ENCODE measurements at regions of chr19 and their contacts with region 1.

Region 1: DNA sequence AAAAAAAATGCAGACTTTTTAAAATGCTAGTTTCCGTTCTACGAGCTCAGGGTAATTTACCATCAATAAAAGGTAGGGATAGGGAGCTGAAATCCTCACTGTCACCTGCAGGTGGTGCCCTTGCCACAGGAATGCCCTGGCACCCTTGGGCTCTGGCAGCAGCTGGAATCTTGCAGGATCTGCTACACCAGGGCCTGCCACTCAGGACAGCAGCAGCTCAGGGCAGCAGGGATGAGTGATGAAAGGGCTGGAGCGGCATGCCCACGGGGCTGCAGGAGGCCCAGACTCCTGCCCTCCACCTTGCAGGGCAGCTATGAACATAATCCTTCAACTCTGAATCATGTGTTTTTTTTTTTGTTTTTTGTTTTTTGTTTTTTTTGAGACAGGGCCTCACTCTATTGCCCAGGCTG is 54.0 kb downstream of the GNG7 start:
- DNase-seq: peak; percentile 72
- H3K4me3 ChIP-seq: no peak overlapping the region
- H3K27ac ChIP-seq: no peak overlapping the region
- H3K4me1 ChIP-seq: no peaks in the 10 kb centered on the region
- H3K27me3 ChIP-seq: peaks cover 0 to 3% of the 10 kb centered on the region in 2 experiments
- CTCF ChIP-seq: peak; percentile 73 to 87
- POLR2A ChIP-seq: no peak

Region 2: DNA sequence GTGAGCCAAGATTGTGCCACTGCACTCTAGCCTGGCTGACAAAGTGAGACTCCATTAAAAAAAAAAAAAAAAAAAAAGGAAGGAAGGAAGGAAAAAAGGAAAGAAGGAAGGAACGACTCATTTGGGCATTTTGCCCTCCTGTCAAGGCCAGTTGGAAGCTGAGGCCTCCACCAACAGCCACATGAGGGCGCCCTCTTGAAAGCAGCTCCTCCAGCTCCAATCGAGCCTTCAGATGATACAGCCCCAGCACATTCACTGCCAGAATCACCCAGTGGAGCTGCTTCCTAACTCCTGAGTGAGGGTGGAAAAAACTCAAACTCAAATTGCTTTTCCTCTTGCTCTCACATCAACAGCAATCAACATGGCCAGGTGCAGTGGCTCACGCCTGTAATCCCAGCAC is 13.1 kb after region 1 on chr19:
- CTCF ChIA-PET with region 1: interaction called, 15 read pairs
- POLR2A ChIA-PET with region 1: no interaction called
- dilution Hi-C with region 1: no loop called
- intact Hi-C with region 1: no loop called
- DNase-seq: no peak
- H3K4me3 ChIP-seq: no peak overlapping the region
- H3K27ac ChIP-seq: no peak overlapping the region
- H3K4me1 ChIP-seq: no peaks in the 10 kb centered on the region
- H3K27me3 ChIP-seq: peaks cover 0 to 2% of the 10 kb centered on the region in 2 experiments
- CTCF ChIP-seq: peak in 1 of 2 donors; percentile 9
- POLR2A ChIP-seq: no peak

Region 3: GRCh38 chr19:2739602-2740313 is 91.2 kb after region 1 on chr19 and contains the start of gene SLC39A3:
- CTCF ChIA-PET with region 1: interaction called, 14 read pairs
- POLR2A ChIA-PET with region 1: no interaction called
- dilution Hi-C with region 1: no loop called
- intact Hi-C with region 1: no loop called
- DNase-seq: peak; percentile 97
- H3K4me3 ChIP-seq: peak within 1 kb of the TSS; percentile 84 to 96 (median 90)
- H3K27ac ChIP-seq: peak within 1 kb of the TSS; percentile 9
- H3K4me1 ChIP-seq: peaks cover 6% of the 10 kb centered on the region
- H3K27me3 ChIP-seq: no peaks in the 10 kb centered on the region
- CTCF ChIP-seq: no peak
- POLR2A ChIP-seq: no peak
- total RNA-seq, gene SLC39A3: 25.8 and 28.0 TPM in 2 replicates

Region 4: GRCh38 chr19:2867025-2867991 is 218.8 kb after region 1 on chr19 and contains the start of gene ZNF556:
- CTCF ChIA-PET with region 1: interaction called, 27 read pairs
- POLR2A ChIA-PET with region 1: no interaction called
- dilution Hi-C with region 1: no loop called
- intact Hi-C with region 1: no loop called
- DNase-seq: no peak
- H3K4me3 ChIP-seq: no peak within 1 kb of the TSS
- H3K27ac ChIP-seq: no peak within 1 kb of the TSS
- H3K4me1 ChIP-seq: no peaks in the 10 kb centered on the region
- H3K27me3 ChIP-seq: no peaks in the 10 kb centered on the region
- CTCF ChIP-seq: no peak
- POLR2A ChIP-seq: no peak
- total RNA-seq, gene ZNF556: not detected in 2 replicates

Measured in endothelial cell of umbilical vein (primary cell).